Lower leg skin (tissue), 4 donors: ENCODE measurements at regions of chr19 and their contacts with region 1.

Region 1: GRCh38 chr19:46404055-46404752 is 9.2 kb downstream of the CCDC8 start:
- DNase-seq: no peak
- H3K4me3 ChIP-seq: no peak overlapping the region
- CTCF ChIP-seq: no peak
- POLR2A ChIP-seq: no peak

Region 2: GRCh38 chr19:46283771-46284170 is 120.4 kb before region 1 on chr19:
- intact Hi-C with region 1: loop called (anchors 5 kb)
- DNase-seq: no peak
- H3K4me3 ChIP-seq: no peak overlapping the region
- CTCF ChIP-seq: no peak
- POLR2A ChIP-seq: no peak

Region 3: GRCh38 chr19:46487802-46488445 is 83.7 kb after region 1 on chr19:
- intact Hi-C with region 1: loop called (anchors 2 kb)
- DNase-seq: peak; percentile 62 to 96
- H3K4me3 ChIP-seq: no peak overlapping the region
- CTCF ChIP-seq: peak in 2 of 3 donors; percentile 40 to 90
- POLR2A ChIP-seq: no peak

Region 4: DNA sequence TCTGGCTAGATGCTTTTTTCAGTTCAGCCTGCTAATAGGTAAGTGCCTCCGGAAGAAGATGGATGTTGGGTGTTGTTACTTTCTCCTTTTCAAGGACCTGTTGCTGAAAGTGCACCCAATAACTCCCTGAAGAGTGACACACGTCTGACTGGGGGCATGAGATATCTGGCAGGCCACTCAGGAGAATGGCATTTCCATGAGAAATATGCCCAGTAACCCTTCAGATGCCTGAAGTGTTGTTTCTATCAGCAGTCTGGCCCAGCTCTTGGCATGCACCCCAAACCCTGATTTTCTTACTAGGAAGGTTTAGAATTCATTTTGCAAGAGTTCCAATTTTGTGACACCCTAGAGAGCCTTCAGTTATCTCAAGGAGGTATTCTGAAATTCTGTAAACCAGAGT is 528.1 kb after region 1 on chr19:
- intact Hi-C with region 1: no loop called
- DNase-seq: peak in 1 of 2 donors; percentile 28
- H3K4me3 ChIP-seq: no peak overlapping the region
- CTCF ChIP-seq: no peak
- POLR2A ChIP-seq: no peak